ENCODE measurements at regions of chr19 and their contacts with region 1.

Region 1: GRCh38 chr19:3053218-3053699 is 9.0 kb downstream of the TLE5 start:
- DNase-seq: no peak
- ATAC-seq: no peak
- H3K4me3 Mint-ChIP-seq: no peak overlapping the region
- H3K27ac Mint-ChIP-seq: no peak overlapping the region
- H3K4me1 Mint-ChIP-seq: peaks cover 10% of the 10 kb centered on the region
- H3K27me3 Mint-ChIP-seq: peaks cover 7% of the 10 kb centered on the region

Region 2: GRCh38 chr19:3041761-3042620 is 11.3 kb before region 1 on chr19:
- POLR2A ChIA-PET with region 1: interaction called, 22 read pairs
- DNase-seq: no peak
- ATAC-seq: no peak
- H3K4me3 Mint-ChIP-seq: peak overlapping the region; percentile 32
- H3K27ac Mint-ChIP-seq: peak overlapping the region; percentile 30
- H3K4me1 Mint-ChIP-seq: peaks cover 7% of the 10 kb centered on the region
- H3K27me3 Mint-ChIP-seq: no peaks in the 10 kb centered on the region

Measured in activated naive CD8-positive, alpha-beta T cell treated with anti-CD3 and anti-CD28 coated beads, Interleukin-2, amount 10 ng/mL, durations not matched to agents 7 days and 5 days (primary cell).